ENCODE measurements at regions of chr5 and their contacts with region 1.

Region 1: DNA sequence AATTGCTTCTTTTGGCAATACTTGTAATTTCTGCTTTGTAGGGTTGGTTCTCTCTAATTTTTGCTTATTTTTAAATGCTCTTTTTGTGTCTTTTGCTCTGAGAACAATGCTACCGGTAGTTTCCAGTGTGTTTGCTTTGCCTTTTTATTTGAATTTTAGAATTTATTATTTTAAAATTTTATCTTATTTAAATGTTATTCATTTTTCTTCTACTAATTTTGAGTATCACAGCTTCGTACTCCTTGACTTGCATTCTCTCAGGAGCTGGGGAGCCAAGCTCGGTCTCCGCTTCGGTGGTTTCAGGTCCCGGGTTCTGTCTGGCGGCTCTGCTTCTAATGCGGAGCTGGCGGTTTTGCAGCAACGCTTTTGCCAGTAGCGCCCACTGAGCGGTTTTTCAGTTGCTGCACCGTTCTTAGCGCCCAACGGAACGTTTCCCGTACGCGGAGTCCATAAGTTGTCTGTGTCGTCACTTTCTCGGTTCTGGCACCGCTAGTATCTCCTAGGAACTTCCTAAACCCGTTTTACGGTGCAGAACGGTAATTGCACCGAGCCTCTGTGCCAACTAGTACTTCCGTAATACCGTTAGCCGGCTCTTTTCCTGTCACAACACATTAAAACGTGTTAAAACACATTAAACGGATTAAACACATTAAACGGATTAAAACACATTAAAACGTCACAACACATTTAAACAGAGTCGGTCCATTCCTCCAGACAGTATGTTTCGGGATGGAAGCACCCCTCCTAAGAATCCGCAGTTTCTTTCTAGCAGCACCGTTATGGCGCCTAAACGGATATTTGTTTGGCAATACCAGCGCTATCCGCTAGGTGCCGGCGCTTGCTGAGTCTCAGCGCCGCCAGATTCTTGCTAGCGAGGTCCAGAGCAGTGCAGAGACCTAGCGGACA is 45.6 kb downstream of the ANXA2R start:
- H3K4me3 Mint-ChIP-seq: peak overlapping the region; percentile 100
- H3K27ac Mint-ChIP-seq: peak overlapping the region; percentile 100
- H3K4me1 Mint-ChIP-seq: peaks cover 34% of the 10 kb centered on the region
- H3K27me3 Mint-ChIP-seq: peaks cover 10% of the 10 kb centered on the region

Region 2: DNA sequence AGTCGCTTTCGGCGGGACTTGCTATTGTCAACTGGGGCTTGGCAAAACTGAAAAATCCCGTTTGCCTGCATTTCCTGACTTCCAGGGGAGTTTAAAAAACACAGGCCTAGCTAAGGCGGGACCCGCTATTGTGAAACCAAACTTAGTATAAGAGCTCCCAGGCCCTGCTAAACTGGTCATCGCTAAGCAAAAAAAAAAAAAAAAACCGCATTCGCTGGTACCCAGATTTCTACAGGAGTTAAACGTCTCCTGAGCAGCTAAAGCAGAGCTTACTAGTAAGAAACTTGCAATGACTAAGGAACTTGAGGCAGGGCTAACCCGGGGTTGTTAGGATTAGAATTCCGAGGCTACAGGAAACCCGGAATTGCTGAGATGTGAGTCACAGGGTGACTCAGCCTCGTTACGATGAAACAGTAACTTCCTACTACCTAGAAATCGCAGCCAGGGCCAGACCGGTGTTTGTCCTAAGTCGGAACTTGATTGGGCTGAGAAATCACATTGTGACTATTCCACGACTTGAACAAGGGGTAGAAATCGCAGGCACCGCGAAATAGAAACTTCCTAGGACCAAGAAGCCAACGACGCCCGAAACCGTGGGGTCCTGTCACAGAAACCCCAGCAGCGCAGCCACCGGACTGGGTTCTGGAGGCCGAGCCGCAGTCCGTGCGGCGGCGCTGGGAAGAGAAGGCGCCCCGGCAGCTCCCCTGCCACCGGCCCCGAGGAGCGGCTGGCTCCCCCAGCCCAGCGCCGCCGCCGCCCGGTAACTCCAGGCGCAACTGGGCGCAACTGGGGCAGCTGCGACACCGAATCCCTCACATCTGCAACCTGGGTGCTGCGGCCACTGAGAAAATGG is 43.8 kb before region 1 on chr5:
- intact Hi-C with region 1: loop called (anchors 1 kb)
- H3K4me3 Mint-ChIP-seq: peak overlapping the region; percentile 83
- H3K27ac Mint-ChIP-seq: peak overlapping the region; percentile 98
- H3K4me1 Mint-ChIP-seq: peaks cover 35% of the 10 kb centered on the region
- H3K27me3 Mint-ChIP-seq: peaks cover 10% of the 10 kb centered on the region

Region 3: GRCh38 chr5:43019614-43020293 is 25.3 kb after region 1 on chr5:
- intact Hi-C with region 1: loop called (anchors 1 kb)
- H3K4me3 Mint-ChIP-seq: peak overlapping the region; percentile 89
- H3K27ac Mint-ChIP-seq: peak overlapping the region; percentile 99
- H3K4me1 Mint-ChIP-seq: peaks cover 37% of the 10 kb centered on the region
- H3K27me3 Mint-ChIP-seq: no peaks in the 10 kb centered on the region

Region 4: DNA sequence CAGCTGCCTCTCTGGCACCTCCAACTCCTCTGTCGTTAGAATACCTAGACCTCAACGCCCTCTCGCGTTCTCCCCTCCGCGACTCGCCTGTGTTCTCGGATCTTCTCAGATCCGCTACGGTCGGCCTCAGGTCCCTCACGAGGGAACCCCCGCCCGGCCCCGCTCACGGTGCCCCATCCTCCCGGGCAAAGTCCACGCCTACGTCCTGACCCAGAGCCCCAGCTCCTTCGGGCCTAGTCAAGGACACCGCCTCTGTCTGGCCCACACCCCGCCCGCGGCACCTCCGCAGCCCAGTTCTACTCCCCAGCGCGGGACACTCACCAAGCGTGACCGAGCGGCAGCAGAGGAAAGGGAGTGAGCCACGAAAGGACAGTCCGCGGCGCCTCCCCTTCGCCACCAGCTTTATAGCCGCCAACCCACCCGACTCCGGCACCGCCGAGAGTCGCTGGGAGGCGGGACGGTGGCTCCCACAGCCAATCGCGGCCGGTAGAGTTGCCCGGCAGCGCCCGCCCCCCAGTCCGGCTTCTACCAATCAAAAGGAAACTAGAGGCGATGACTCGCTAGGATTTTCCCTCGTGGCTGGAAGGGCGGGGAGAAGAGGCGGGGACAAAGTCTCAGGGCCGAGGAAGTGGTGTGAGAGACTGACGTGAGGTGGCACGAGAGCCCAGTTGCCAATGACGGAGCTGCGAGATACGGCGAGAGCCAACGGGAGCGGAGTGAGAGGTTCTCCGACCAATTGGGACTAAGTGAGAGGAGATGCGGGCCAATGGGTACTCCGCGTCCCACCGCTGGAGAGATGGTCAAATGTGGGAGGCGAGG is 318.7 kb after region 1 on chr5 and contains the start of gene HMGCS1:
- intact Hi-C with region 1: loop called (anchors 5 kb)
- H3K4me3 Mint-ChIP-seq: peak within 1 kb of the TSS; percentile 98
- H3K27ac Mint-ChIP-seq: peak within 1 kb of the TSS; percentile 98
- H3K4me1 Mint-ChIP-seq: peaks cover 40% of the 10 kb centered on the region
- H3K27me3 Mint-ChIP-seq: peaks cover 5% of the 10 kb centered on the region

Measured in dendritic cell treated with granulocyte-macrophage colony-stimulating factor and Interleukin-4, amounts not matched to agents 40 ng/mL and 50 ng/mL, for 4 days (primary cell).